Ascending aorta (tissue), 2 donors: ENCODE measurements at regions of chr4 and their contacts with region 1.

Region 1: DNA sequence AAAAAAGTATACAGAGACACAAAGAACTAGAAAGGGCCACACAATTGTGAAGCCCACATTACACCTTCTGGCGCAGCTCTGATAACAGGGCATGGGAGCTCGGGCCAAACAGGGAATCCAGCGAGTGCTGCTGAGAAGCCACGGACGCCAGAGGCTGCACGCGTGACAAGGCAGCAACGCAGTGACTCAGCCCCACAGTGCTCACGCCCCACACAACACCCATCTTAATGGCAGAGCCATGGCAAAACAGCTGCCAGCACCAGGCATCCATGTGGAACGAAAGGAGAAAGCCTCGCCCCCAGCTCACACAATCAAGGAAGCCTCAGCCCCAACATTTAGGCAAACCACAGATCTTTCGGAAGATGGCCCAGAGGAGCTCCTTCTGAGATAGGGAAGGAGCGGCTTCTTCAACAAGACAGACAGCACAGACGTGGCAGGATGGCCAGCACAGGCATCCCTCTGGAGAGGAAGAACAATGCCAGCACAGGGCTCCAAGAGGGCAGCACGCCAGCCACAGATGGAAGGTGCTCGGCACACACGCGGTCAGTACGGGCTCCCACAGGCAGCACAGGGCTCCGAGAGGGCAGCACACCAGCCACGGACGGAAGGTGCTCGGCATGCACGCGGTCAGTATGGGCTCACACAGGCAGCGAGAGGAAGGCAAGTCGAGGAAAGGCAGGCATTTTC is 33.1 kb downstream of the GAK start:
- DNase-seq: no peak
- H3K4me3 ChIP-seq: no peak overlapping the region
- H3K27ac ChIP-seq: no peak overlapping the region
- H3K4me1 ChIP-seq: no peaks in the 10 kb centered on the region
- H3K27me3 ChIP-seq: no peaks in the 10 kb centered on the region
- CTCF ChIP-seq: no peak

Region 2: DNA sequence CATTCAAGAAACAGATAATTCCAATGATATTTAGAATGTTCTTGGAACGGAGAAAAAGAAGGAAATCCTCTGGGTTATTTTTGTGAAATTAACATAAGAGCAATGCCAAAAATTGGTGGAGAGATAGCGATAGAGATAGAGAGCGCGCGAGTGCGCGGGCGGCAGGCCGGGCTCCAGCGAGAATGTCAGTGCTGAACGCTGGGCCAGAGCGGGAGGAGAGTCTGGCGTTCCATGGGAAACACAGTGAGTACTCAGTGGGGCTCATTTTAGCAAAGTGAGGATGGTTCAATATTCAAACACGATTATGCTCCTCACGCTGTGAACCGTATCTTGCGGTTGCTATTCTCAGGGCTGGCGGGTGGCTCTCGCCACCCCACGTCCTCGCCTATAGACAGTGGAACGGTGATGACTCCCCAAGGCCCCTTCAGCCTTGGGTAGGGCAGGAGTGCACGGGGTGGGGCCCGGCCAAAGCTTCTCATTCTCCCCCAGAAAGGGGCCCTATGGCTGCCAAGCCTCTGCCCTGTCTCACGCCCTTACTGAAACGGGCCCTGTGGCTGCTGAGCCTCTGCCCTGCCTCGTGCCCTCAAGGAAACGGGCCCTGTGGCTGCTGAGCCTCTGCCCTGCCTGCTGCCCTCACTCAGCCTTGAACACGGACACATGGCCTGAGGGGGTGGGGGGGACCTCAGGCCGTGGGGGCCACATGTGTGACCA is 90.0 kb before region 1 on chr4:
- intact Hi-C with region 1: no loop called
- DNase-seq: no peak
- H3K4me3 ChIP-seq: no peak overlapping the region
- H3K27ac ChIP-seq: no peak overlapping the region
- H3K4me1 ChIP-seq: no peaks in the 10 kb centered on the region
- H3K27me3 ChIP-seq: no peaks in the 10 kb centered on the region
- CTCF ChIP-seq: no peak

Region 3: GRCh38 chr4:866761-867390 is 32.1 kb before region 1 on chr4:
- intact Hi-C with region 1: no loop called
- DNase-seq: no peak
- H3K4me3 ChIP-seq: no peak overlapping the region
- H3K27ac ChIP-seq: no peak overlapping the region
- H3K4me1 ChIP-seq: no peaks in the 10 kb centered on the region
- H3K27me3 ChIP-seq: no peaks in the 10 kb centered on the region
- CTCF ChIP-seq: no peak

Region 4: GRCh38 chr4:911981-912441 is 13.0 kb after region 1 on chr4:
- intact Hi-C with region 1: loop called (anchors 1 kb)
- DNase-seq: no peak
- H3K4me3 ChIP-seq: no peak overlapping the region
- H3K27ac ChIP-seq: no peak overlapping the region
- H3K4me1 ChIP-seq: no peaks in the 10 kb centered on the region
- H3K27me3 ChIP-seq: no peaks in the 10 kb centered on the region
- CTCF ChIP-seq: no peak